T-cell (primary cell): ENCODE measurements at regions of chr12 and their contacts with region 1.

Region 1: GRCh38 chr12:9049520-9050133 is 60.3 kb downstream of the KLRG1 start:
- DNase-seq: peak in 11 of 35 experiments; percentile 11 to 78 (median 27)
- ATAC-seq: peak in 3 of 4 experiments; percentile 77 to 81 (median 81)
- H3K4me3 ChIP-seq: no peak overlapping the region
- H3K4me3 Mint-ChIP-seq: no peak overlapping the region
- H3K27ac ChIP-seq: no peak overlapping the region
- H3K27ac Mint-ChIP-seq: peak overlapping the region; percentile 73 to 77
- H3K4me1 ChIP-seq: peaks cover 6 to 7% of the 10 kb centered on the region in 2 experiments
- H3K4me1 Mint-ChIP-seq: peaks cover 16 to 35% (median 26%) of the 10 kb centered on the region in 3 donors
- H3K27me3 ChIP-seq: no peaks in the 10 kb centered on the region
- H3K27me3 Mint-ChIP-seq: no peaks in the 10 kb centered on the region

Region 2: DNA sequence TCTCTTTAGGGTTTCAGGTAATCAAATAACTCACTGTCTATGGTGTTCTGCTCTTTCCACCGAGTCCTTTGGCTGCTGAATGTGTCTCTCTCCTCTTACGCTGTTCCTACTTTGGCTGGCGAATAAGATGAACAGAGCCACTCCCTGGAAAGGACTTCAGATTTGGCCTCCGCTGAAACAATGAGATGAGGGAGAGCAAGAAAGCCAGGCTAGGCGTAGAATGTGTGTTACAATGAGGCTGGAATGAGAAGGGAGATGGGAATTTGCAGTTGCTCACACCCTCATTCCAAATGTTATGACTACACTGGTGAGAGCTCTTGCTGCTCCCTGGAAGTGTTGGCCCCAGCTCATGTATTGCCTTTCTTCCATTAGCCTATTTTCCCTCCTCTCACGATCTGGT is 387.0 kb before region 1 on chr12 and contains the start of gene MFAP5:
- CTCF ChIA-PET with region 1: interaction called, 13 to 19 read pairs
- POLR2A ChIA-PET with region 1: no interaction called
- DNase-seq: no peak
- ATAC-seq: no peak
- H3K4me3 ChIP-seq: no peak within 1 kb of the TSS
- H3K4me3 Mint-ChIP-seq: no peak within 1 kb of the TSS
- H3K27ac ChIP-seq: no peak within 1 kb of the TSS
- H3K27ac Mint-ChIP-seq: no peak within 1 kb of the TSS
- H3K4me1 ChIP-seq: no peaks in the 10 kb centered on the region
- H3K4me1 Mint-ChIP-seq: no peaks in the 10 kb centered on the region
- H3K27me3 ChIP-seq: no peaks in the 10 kb centered on the region
- H3K27me3 Mint-ChIP-seq: peaks cover 5 to 8% of the 10 kb centered on the region in 2 donors
- total RNA-seq, gene MFAP5: not detected

Region 3: GRCh38 chr12:8687846-8688601 is 361.6 kb before region 1 on chr12:
- CTCF ChIA-PET with region 1: interaction called in 1 of 2 experiments, 10 read pairs
- POLR2A ChIA-PET with region 1: interaction called in 1 of 2 experiments, 3 read pairs
- DNase-seq: peak in 1 of 35 experiments; percentile 20
- ATAC-seq: peak; percentile 48 to 61 (median 58)
- H3K4me3 ChIP-seq: no peak overlapping the region
- H3K4me3 Mint-ChIP-seq: no peak overlapping the region
- H3K27ac ChIP-seq: no peak overlapping the region
- H3K27ac Mint-ChIP-seq: no peak overlapping the region
- H3K4me1 ChIP-seq: peaks cover 5 to 15% of the 10 kb centered on the region in 2 experiments
- H3K4me1 Mint-ChIP-seq: peaks cover 10 to 15% (median 12%) of the 10 kb centered on the region in 3 donors
- H3K27me3 ChIP-seq: no peaks in the 10 kb centered on the region
- H3K27me3 Mint-ChIP-seq: no peaks in the 10 kb centered on the region

Region 4: GRCh38 chr12:8943565-8944186 is 106.0 kb before region 1 on chr12:
- CTCF ChIA-PET with region 1: interaction called, 10 to 119 read pairs
- POLR2A ChIA-PET with region 1: no interaction called
- DNase-seq: no peak
- ATAC-seq: no peak
- H3K4me3 ChIP-seq: no peak overlapping the region
- H3K4me3 Mint-ChIP-seq: no peak overlapping the region
- H3K27ac ChIP-seq: no peak overlapping the region
- H3K27ac Mint-ChIP-seq: peak overlapping the region in 1 of 2 donors; percentile 31
- H3K4me1 ChIP-seq: peaks cover 13 to 17% of the 10 kb centered on the region in 2 experiments
- H3K4me1 Mint-ChIP-seq: peaks cover 26 to 29% (median 27%) of the 10 kb centered on the region in 3 donors
- H3K27me3 ChIP-seq: no peaks in the 10 kb centered on the region
- H3K27me3 Mint-ChIP-seq: no peaks in the 10 kb centered on the region

Region 5: DNA sequence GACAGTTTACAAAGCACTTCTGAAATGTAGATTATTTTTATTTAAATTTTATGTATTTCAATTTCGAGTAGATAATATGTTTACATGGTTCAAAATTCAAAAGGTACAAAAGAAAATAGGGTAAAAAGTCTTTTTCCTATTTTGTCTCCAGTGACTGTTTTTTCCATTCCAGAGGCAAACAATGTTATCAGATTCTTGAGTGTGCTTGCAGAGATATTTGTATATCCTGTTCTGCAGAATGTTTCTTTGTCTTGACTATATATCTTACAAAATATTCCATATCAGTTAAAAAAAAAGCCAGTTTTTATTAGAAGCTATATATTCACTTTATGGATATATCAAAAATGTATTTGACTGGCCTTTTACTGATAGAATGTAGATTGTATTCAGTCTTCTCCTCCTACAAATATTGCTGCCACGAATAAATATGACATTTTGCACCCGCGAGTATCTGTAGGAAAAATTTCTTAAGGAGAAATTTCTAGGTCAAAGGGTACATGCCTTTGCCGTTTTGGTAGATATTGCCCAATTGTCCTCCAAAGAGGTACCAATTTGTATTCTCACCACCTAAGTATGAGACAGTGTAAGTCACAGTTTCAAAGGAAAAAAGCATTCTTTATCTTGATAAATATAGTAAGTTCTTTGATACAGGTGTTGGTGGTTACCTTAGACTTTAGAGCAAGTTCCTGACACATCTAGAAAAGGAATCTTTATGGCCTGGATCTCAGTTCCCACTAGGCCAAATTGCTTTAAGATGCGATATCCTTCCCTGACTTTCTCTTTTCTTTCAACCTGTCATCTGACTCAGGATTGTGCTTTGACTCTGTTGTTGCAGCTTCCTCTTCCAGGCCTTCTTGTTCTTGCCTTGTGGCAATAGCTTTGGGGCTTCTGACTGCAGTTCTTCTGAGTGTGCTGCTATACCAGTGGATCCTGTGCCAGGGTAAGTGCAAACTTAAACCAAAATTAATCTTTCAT is 58.0 kb before region 1 on chr12:
- CTCF ChIA-PET with region 1: interaction called in 1 of 2 experiments, 10 read pairs
- POLR2A ChIA-PET with region 1: no interaction called
- DNase-seq: peak in 3 of 35 experiments; percentile 2 to 39 (median 8)
- ATAC-seq: peak; percentile 33 to 59 (median 52)
- H3K4me3 ChIP-seq: peak overlapping the region in 1 of 2 donors; percentile 45
- H3K4me3 Mint-ChIP-seq: peak overlapping the region; percentile 62 to 85 (median 75)
- H3K27ac ChIP-seq: peak overlapping the region; percentile 66
- H3K27ac Mint-ChIP-seq: peak overlapping the region; percentile 94 to 98
- H3K4me1 ChIP-seq: peaks cover 40 to 46% of the 10 kb centered on the region in 2 experiments
- H3K4me1 Mint-ChIP-seq: peaks cover 72 to 79% (median 73%) of the 10 kb centered on the region in 3 donors
- H3K27me3 ChIP-seq: no peaks in the 10 kb centered on the region
- H3K27me3 Mint-ChIP-seq: no peaks in the 10 kb centered on the region

Region 6: DNA sequence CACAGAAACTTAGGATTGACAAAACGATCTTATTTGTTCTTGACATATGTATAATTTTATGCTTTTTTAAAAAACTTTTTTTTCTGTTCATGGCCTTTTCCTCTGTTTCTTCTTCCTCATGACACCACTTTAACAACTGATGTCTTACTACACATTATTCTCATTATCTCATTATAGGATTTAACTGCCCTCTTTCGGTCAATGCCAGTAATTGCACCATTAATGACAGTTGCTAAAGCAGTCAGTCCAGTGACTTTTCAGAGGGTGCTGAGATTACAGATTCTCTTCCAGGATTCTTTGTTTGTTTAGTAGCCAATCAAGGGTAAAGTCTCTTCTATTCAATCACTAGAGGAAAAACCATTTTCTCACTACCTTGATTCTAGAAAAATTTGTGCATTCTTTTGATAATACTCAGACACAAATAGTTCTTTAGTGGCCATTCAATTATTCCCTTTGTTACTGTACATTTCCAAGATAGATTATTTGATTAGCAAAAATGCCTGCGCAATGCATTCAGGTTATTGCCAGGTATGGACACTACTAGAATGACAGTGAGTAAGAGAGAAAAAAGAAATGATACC is 10.1 kb before region 1 on chr12:
- CTCF ChIA-PET with region 1: interaction called, 18 to 22 read pairs
- POLR2A ChIA-PET with region 1: no interaction called
- DNase-seq: peak in 7 of 35 experiments; percentile 11 to 75 (median 24)
- ATAC-seq: peak; percentile 70 to 86 (median 80)
- H3K4me3 ChIP-seq: no peak overlapping the region
- H3K4me3 Mint-ChIP-seq: peak overlapping the region in 1 of 3 donors; percentile 16
- H3K27ac ChIP-seq: peak overlapping the region; percentile 40
- H3K27ac Mint-ChIP-seq: peak overlapping the region; percentile 80 to 92
- H3K4me1 ChIP-seq: peaks cover 34 to 35% of the 10 kb centered on the region in 2 experiments
- H3K4me1 Mint-ChIP-seq: peaks cover 41 to 73% (median 70%) of the 10 kb centered on the region in 3 donors
- H3K27me3 ChIP-seq: no peaks in the 10 kb centered on the region
- H3K27me3 Mint-ChIP-seq: no peaks in the 10 kb centered on the region

Region 7: GRCh38 chr12:9096563-9097176 is 47.0 kb after region 1 on chr12:
- CTCF ChIA-PET with region 1: no interaction called
- POLR2A ChIA-PET with region 1: no interaction called
- DNase-seq: no peak
- ATAC-seq: no peak
- H3K4me3 ChIP-seq: no peak overlapping the region
- H3K4me3 Mint-ChIP-seq: no peak overlapping the region
- H3K27ac ChIP-seq: no peak overlapping the region
- H3K27ac Mint-ChIP-seq: no peak overlapping the region
- H3K4me1 ChIP-seq: no peaks in the 10 kb centered on the region
- H3K4me1 Mint-ChIP-seq: no peaks in the 10 kb centered on the region
- H3K27me3 ChIP-seq: no peaks in the 10 kb centered on the region
- H3K27me3 Mint-ChIP-seq: no peaks in the 10 kb centered on the region